ENCODE measurements at regions of chr19 and their contacts with region 1.

Region 1: DNA sequence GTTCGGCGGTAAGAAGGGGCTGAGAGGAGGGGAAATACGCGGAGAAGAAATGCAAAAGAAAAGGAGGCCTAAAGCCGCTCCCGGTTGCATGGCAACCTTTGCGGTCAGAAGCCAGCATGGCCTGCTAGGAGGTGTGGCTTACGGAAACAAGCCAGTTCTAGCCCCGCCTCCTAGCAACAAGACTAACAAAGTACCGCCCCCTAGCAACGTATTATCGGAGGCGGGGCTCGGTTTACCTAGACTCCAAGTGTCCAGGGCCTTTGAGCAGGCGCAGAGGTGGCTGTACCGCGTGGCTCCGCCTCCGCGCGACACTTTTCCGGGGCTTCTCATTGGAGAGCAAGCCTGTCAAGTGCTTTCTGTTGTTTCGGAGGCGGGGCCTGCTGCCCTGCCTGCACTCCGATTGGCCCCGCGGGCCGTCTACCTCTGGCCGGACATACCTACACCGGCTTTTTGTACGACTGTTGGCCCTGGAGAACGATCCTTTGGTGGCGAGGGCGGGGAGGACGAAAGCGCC is 337 bp upstream of the CYTH2 start:
- DNase-seq: peak; percentile 100
- H3K4me3 ChIP-seq: peak overlapping the region; percentile 90 to 91
- H3K27ac ChIP-seq: peak overlapping the region; percentile 97 to 99
- H3K4me1 ChIP-seq: peaks cover 11 to 13% of the 10 kb centered on the region in 2 donors
- H3K27me3 ChIP-seq: no peaks in the 10 kb centered on the region
- CTCF ChIP-seq: no peak

Region 2: DNA sequence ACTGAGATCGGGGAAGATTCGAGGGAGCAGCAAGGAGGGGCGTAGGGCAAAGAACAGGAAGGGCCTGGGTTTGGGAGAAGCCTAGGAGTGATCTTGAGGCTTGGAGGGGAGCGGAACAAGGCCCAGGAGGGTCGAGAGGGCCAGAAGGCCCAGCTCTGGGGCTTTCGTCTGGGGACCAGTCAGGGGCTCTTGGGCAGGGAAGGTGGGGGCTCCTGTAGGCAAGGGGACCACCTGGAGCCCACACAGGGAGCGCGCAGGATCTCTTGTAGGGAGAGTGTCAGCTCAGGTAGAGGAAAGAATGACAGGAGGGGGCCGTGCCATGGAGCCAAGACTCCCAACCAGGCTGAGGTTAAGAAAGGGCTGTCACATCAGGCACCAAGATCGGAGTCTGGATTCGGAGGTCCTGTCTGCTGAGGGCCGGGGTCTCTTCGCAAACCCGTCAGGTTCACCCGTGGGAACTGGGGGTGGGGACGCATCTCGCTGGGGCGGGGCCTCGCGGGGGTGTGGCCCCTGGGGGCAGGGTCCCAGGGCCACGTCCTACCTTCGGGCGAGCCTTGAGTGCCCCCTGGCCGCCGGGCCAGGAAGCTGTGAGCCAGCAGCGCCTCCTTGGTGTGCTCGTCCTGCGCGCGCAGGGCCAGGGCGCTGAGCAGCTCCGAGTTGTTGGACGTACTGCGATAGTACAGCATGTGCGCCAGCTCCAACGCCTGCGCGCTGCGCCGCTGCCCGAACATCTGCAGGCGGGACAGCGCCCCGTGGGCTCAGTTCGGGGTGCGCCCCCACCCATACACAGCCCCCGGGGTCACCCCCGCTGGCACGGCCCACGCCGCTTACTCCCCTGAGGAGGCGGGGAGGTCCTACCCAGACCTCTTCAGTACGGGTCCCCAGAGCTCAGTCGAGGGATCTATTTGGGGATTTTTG is 135.1 kb before region 1 on chr19:
- intact Hi-C with region 1: loop called (anchors 1 kb)
- DNase-seq: peak; percentile 68 to 93
- H3K4me3 ChIP-seq: peak overlapping the region; percentile 29 to 66
- H3K27ac ChIP-seq: peak overlapping the region; percentile 79 to 89
- H3K4me1 ChIP-seq: peaks cover 0 to 11% of the 10 kb centered on the region in 2 donors
- H3K27me3 ChIP-seq: no peaks in the 10 kb centered on the region
- CTCF ChIP-seq: peak; percentile 84 to 93 (median 92)

Region 3: DNA sequence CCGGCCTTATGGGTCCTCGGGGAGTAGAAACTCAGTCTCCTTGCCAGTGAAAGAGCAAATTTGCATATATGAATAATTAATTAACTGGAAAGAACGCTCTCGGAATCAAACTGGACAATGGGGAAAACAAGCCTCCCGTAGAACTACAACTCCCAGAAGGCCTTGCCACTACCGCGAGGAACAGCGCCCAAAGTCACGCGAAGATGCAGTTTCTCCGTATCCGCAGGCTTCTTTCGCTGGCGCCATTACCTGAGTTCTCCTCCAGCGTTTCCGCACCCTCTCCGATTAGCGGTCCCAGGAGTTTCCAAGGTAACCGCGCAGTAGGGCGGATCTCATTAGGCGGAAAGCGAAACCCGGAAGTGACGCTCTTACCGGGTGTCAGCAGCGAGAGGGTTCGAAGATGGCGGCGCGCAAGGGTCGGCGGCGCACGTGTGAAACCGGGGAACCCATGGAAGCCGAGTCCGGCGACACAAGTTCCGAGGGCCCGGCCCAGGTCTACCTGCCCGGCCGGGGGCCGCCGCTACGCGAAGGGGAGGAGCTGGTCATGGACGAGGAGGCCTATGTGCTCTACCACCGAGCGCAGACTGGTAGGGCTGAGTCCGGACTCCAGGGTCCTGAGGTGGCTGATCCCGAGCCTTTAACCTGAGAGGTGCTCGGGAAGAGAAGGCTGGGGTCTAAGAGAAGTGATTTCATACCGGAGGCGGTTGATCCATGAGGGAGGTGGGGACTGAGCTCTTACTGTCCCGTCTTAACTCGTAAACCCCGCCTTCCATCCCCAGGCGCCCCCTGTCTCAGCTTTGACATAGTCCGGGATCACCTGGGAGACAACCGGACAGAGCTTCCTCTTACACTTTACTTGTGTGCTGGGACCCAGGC is 23.0 kb before region 1 on chr19 and contains the start of gene GRWD1:
- intact Hi-C with region 1: loop called (anchors 1 kb)
- DNase-seq: peak; percentile 72 to 96
- H3K4me3 ChIP-seq: peak within 1 kb of the TSS; percentile 76 to 81
- H3K27ac ChIP-seq: peak within 1 kb of the TSS; percentile 87 to 89
- H3K4me1 ChIP-seq: peaks cover 3 to 15% of the 10 kb centered on the region in 2 donors
- H3K27me3 ChIP-seq: peaks cover 7% of the 10 kb centered on the region
- CTCF ChIP-seq: no peak
- total RNA-seq, gene GRWD1: 16.0 TPM

Region 4: DNA sequence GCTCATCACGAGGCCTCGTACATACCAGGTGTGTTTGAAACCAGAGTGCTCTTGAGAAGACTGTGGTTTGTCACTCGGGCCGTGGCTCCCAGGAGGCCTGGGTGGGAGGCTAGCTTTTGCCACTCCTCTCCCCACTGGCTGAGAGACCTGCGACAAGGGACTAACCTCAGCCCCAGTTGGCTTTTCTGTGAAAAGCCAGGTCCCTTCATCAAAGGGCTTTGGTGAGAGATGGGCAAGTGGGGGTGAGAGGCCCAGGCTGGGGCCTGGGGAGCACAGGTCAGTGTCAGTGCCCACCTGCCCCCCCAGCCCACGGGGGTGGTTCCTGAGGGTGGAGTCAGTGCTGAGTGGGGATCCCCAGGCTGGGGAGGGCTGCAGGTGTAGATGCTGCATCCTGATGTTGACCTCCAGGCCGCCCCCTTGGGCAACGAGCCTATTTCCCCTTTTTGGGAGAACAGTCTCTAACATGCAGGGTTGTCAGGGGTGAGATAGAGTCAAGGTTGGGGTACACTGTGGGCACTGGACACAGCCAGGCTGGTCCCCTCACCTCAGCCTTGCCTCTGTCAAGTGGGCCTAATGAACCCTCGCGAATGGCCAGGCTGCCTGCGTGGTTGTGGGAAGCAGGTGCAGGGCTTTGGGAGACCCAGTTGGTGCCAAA is 12.8 kb before region 1 on chr19:
- intact Hi-C with region 1: no loop called
- DNase-seq: no peak
- H3K4me3 ChIP-seq: no peak overlapping the region
- H3K27ac ChIP-seq: no peak overlapping the region
- H3K4me1 ChIP-seq: no peaks in the 10 kb centered on the region
- H3K27me3 ChIP-seq: no peaks in the 10 kb centered on the region
- CTCF ChIP-seq: no peak

Region 5: DNA sequence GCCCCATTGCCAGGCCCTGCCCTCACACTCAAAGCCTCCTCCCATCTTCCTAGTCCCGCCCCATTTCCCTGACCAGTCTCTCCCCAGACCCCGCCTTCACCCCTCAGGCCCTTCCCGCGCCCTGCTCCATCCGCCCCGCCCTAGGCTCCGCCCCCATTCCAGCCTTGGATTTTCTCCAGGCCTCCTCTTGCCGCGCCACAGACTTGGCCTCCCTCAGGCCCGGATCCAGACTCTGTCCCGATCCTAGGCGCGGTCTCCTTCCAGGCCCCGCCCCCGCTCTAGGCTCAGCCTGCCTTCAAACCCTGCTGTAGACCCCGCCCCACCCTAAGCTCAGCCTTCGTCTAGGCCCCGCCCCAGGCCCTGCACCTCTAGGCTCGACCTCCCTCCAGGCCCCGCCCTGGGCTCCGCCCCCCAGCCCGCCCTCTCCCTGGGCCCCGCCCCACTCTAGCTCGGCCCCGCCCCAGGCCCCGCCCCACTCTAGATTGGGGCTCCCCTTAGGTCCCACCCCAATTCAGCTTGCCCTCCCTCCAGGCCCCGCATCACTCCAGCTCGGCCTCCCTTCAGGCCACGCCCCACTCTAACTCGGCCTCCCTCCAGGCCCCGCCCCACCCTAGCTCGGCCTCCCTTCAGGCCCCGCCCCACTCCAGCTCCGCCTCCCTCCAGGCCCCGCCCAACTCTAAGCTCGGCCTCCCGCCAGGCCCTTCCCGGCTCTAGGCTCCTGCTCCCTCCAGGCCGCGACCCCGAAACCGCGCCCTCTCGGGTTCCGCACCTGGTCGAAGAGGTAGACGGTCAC is 24.3 kb after region 1 on chr19:
- intact Hi-C with region 1: loop called (anchors 2 kb)
- DNase-seq: peak; percentile 89 to 95
- H3K4me3 ChIP-seq: peak overlapping the region; percentile 58 to 72
- H3K27ac ChIP-seq: peak overlapping the region; percentile 37 to 61
- H3K4me1 ChIP-seq: peaks cover 0 to 10% of the 10 kb centered on the region in 2 donors
- H3K27me3 ChIP-seq: peaks cover under 1% of the 10 kb centered on the region
- CTCF ChIP-seq: no peak

Region 6: GRCh38 chr19:48637170-48637947 is 168.5 kb after region 1 on chr19 and contains the start of gene DBP:
- intact Hi-C with region 1: loop called (anchors 2 kb)
- DNase-seq: peak; percentile 98 to 100
- H3K4me3 ChIP-seq: peak within 1 kb of the TSS; percentile 66 to 89
- H3K27ac ChIP-seq: peak within 1 kb of the TSS; percentile 94 to 99
- H3K4me1 ChIP-seq: peaks cover 19 to 39% of the 10 kb centered on the region in 2 donors
- H3K27me3 ChIP-seq: no peaks in the 10 kb centered on the region
- CTCF ChIP-seq: no peak
- total RNA-seq, gene DBP: 0.21 TPM